Activated CD4-positive, alpha-beta memory T cell treated with anti-CD3 and anti-CD28 coated beads, Interleukin-2, amount 10 ng/mL, durations not matched to agents 7 days and 5 days (primary cell): ENCODE measurements at regions of chr1 and their contacts with region 1.

Region 1: DNA sequence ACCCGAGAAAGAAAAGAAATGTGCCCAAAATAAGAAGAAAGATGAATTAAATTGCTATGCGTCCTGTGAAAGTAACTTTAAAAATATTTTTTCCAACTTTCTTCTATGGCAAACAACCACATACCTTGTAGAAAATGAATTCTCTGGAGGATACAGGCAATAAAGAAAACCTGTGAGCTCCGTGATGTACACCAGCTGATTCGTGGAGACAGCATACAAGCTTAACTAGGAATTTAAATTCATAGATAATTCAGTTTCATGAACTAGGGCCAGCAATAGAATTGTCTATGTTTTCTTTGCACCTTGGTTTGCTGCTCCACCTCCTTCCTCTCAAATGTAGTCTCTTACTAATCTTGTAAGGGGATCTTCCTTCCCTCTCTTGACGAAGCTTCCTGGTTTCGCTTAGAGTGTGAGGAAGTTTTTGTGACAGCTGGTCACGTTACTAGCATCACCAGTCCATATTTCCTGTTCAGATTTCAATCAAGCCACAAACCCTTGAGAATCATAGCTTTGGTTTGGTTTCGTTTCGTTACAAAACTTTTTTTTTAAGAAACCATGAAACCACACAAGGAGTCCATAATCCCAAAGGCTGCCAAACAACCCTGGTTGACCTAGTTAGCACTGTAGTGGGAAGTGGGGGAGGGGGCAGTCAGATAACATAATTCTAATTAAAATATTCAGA is 35.8 kb downstream of the GREM2 start:
- DNase-seq: peak; percentile 40
- H3K4me3 Mint-ChIP-seq: peak overlapping the region; percentile 48
- H3K27ac Mint-ChIP-seq: peak overlapping the region; percentile 88
- H3K4me1 Mint-ChIP-seq: peaks cover 28% of the 10 kb centered on the region
- H3K27me3 Mint-ChIP-seq: peaks cover 2% of the 10 kb centered on the region

Region 2: GRCh38 chr1:240611619-240612480 is 35.7 kb after region 1 on chr1 and contains the start of gene GREM2:
- CTCF ChIA-PET with region 1: interaction called, 4 read pairs
- POLR2A ChIA-PET with region 1: interaction called, 19 read pairs
- DNase-seq: peak; percentile 70
- H3K4me3 Mint-ChIP-seq: peak within 1 kb of the TSS; percentile 85
- H3K27ac Mint-ChIP-seq: peak within 1 kb of the TSS; percentile 77
- H3K4me1 Mint-ChIP-seq: peaks cover 48% of the 10 kb centered on the region
- H3K27me3 Mint-ChIP-seq: peaks cover 36% of the 10 kb centered on the region
- total RNA-seq, gene GREM2: 1.4 to 1.6 TPM